Activated naive CD8-positive, alpha-beta T cell treated with anti-CD3 and anti-CD28 coated beads, Interleukin-2, amount 10 ng/mL, durations not matched to agents 7 days and 5 days (primary cell): ENCODE measurements at regions of chrX and their contacts with region 1.

Region 1: DNA sequence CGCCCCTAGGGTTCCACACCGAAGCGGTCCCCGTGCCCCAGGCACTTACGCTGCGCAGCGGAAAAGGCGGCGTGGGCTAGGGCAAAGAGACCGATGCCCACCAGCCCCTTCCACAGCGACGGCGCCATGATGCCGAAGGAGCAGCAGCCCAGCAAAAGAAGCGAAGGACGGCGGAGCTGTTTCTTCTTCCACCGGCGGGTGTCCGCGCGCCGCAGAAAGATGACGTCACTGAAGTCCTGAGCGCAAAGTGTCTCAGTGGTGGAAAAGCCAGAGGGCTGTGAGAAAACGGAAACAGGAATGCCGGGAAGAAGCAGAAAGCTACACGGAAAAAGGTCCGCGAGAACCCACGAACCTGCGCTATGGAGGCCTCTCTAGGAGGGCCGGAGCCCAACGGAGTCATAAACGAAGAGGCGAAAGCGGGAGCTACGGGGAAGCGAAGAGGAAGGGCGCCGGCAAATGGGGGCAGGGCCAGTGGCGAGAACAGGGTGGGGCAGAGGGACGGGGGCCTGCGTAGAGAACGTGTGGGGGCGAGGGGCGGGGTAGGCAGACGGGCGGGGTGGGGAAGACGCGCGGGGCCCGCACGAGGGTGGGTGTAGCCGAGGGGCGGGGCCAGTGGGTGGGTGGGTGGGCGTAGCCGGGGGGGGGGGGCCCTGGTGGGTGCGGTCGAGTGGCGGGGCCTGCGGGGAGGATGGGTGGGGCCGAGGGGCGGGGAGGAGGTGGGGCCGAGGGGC is at the start of gene MMGT1:
- DNase-seq: peak; percentile 79
- ATAC-seq: peak; percentile 89
- H3K4me3 Mint-ChIP-seq: peak within 1 kb of the TSS; percentile 95
- H3K27ac Mint-ChIP-seq: peak within 1 kb of the TSS; percentile 97
- H3K4me1 Mint-ChIP-seq: peaks cover 16% of the 10 kb centered on the region
- H3K27me3 Mint-ChIP-seq: peaks cover 3% of the 10 kb centered on the region
- total RNA-seq, gene MMGT1: 17.5 to 18.7 TPM

Region 2: DNA sequence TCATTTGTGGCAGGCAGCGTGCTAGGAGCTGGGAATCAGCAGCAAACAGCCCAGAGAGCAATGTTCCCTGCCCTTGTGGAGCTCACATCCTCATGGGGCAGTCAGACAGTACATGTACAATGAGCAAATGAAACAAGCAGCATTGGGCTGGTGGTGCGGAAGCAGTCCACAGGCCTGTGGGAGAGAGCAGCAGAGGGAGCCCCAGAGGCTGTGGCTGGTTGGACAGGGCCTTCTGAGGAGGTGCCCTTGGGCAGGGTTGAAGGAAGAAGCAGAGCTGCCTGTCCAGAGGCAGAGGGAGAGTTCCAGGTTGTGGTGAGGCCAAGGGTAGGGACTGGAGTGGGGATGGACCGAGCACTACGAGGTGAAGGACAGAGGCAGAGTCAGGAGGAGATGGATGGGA is 22.4 kb before region 1 on chrX:
- POLR2A ChIA-PET with region 1: no interaction called
- DNase-seq: no peak
- ATAC-seq: no peak
- H3K4me3 Mint-ChIP-seq: no peak overlapping the region
- H3K27ac Mint-ChIP-seq: no peak overlapping the region
- H3K4me1 Mint-ChIP-seq: no peaks in the 10 kb centered on the region
- H3K27me3 Mint-ChIP-seq: no peaks in the 10 kb centered on the region

Region 3: GRCh38 chrX:135985141-135985972 is 11.6 kb after region 1 on chrX and contains the start of gene SLC9A6:
- POLR2A ChIA-PET with region 1: interaction called, 15 read pairs
- DNase-seq: peak; percentile 76
- ATAC-seq: peak; percentile 84
- H3K4me3 Mint-ChIP-seq: peak within 1 kb of the TSS; percentile 98
- H3K27ac Mint-ChIP-seq: peak within 1 kb of the TSS; percentile 91
- H3K4me1 Mint-ChIP-seq: peaks cover 39% of the 10 kb centered on the region
- H3K27me3 Mint-ChIP-seq: no peaks in the 10 kb centered on the region
- total RNA-seq, gene SLC9A6: 14.6 to 17.3 TPM